T-cell (primary cell): ENCODE measurements at regions of chr9 and their contacts with region 1.

Region 1: DNA sequence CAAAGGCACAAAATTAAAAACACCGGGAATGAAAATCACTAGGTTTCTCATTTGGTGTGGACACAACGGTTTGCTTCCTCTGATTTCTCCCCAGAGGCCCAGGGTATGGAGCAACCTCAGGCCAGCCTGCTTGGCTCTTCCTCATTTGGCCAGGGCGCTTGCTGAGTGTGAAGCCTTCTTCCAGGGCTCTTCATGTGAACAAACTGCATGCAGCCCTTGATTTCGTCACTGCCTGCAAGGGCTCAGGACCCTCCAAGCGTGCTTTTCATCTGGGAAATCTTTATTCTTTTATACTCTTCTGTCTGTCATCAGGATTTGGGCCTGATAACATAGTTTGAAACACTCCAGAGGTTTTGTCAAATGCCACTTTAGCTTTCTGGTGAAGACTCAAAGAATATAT is 122.6 kb upstream of the KLF4 start:
- DNase-seq: peak in 1 of 35 experiments; percentile 27
- ATAC-seq: no peak
- H3K4me3 ChIP-seq: no peak overlapping the region
- H3K4me3 Mint-ChIP-seq: no peak overlapping the region
- H3K27ac ChIP-seq: no peak overlapping the region
- H3K27ac Mint-ChIP-seq: no peak overlapping the region
- H3K4me1 ChIP-seq: no peaks in the 10 kb centered on the region
- H3K4me1 Mint-ChIP-seq: no peaks in the 10 kb centered on the region
- H3K27me3 ChIP-seq: no peaks in the 10 kb centered on the region
- H3K27me3 Mint-ChIP-seq: peaks cover 0 to 1% of the 10 kb centered on the region in 2 donors

Region 2: DNA sequence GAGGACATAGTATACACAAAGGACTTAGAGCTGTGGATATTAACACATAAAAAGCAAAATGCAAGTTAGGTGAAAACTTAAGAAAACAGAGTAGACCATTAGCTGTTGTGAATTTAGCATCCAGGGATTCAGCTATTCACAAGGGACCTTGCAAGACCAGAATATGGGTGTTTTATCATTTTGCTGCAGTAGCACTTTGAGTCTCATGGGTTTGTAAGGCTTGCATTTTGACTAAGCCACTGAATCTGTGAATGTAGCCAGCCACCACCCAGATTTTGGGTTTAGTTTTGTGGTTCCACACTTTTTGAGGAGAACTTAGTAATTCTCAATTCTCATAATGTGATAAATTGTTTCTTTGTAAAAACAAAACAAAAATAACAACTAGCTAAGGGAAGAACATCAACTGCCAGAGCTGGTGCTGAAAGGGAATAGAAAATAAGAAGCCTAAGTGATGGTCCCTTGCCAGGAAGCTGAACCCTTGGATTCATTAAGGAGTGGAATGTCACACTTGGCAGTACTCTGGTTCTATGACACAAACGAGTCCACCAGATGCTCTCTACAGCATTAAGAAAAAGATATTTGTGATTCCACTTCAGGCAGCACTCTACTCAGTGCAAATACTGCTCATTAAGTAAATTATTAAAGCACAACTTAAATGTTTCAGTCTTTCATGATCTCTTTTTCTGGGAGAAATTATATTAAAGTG is 1306.6 kb before region 1 on chr9:
- CTCF ChIA-PET with region 1: interaction called in 1 of 2 experiments, 17 read pairs
- POLR2A ChIA-PET with region 1: no interaction called
- DNase-seq: no peak
- ATAC-seq: no peak
- H3K4me3 ChIP-seq: no peak overlapping the region
- H3K4me3 Mint-ChIP-seq: no peak overlapping the region
- H3K27ac ChIP-seq: no peak overlapping the region
- H3K27ac Mint-ChIP-seq: no peak overlapping the region
- H3K4me1 ChIP-seq: no peaks in the 10 kb centered on the region
- H3K4me1 Mint-ChIP-seq: no peaks in the 10 kb centered on the region
- H3K27me3 ChIP-seq: no peaks in the 10 kb centered on the region
- H3K27me3 Mint-ChIP-seq: no peaks in the 10 kb centered on the region

Region 3: GRCh38 chr9:107587191-107587963 is 24.8 kb before region 1 on chr9:
- CTCF ChIA-PET with region 1: no interaction called
- POLR2A ChIA-PET with region 1: no interaction called
- DNase-seq: no peak
- ATAC-seq: no peak
- H3K4me3 ChIP-seq: no peak overlapping the region
- H3K4me3 Mint-ChIP-seq: no peak overlapping the region
- H3K27ac ChIP-seq: no peak overlapping the region
- H3K27ac Mint-ChIP-seq: no peak overlapping the region
- H3K4me1 ChIP-seq: no peaks in the 10 kb centered on the region
- H3K4me1 Mint-ChIP-seq: no peaks in the 10 kb centered on the region
- H3K27me3 ChIP-seq: peaks cover 0 to 11% of the 10 kb centered on the region in 2 experiments
- H3K27me3 Mint-ChIP-seq: peaks cover 7 to 13% of the 10 kb centered on the region in 2 donors